Endothelial cell of umbilical vein (primary cell): ENCODE measurements at regions of chr6 and their contacts with region 1.

Region 1: GRCh38 chr6:170516783-170517616 is 36.1 kb downstream of the PSMB1 start:
- DNase-seq: peak; percentile 59
- H3K4me3 ChIP-seq: no peak overlapping the region
- H3K27ac ChIP-seq: no peak overlapping the region
- H3K4me1 ChIP-seq: no peaks in the 10 kb centered on the region
- H3K27me3 ChIP-seq: peaks cover 2 to 7% of the 10 kb centered on the region in 2 experiments
- CTCF ChIP-seq: peak; percentile 60 to 76
- POLR2A ChIP-seq: no peak

Region 2: GRCh38 chr6:168956884-168957730 is 1559.9 kb before region 1 on chr6:
- CTCF ChIA-PET with region 1: interaction called, 5 read pairs
- POLR2A ChIA-PET with region 1: no interaction called
- dilution Hi-C with region 1: no loop called
- intact Hi-C with region 1: loop called (anchors 1 kb)
- DNase-seq: peak; percentile 17
- H3K4me3 ChIP-seq: no peak overlapping the region
- H3K27ac ChIP-seq: no peak overlapping the region
- H3K4me1 ChIP-seq: no peaks in the 10 kb centered on the region
- H3K27me3 ChIP-seq: no peaks in the 10 kb centered on the region
- CTCF ChIP-seq: peak; percentile 60 to 65
- POLR2A ChIP-seq: no peak

Region 3: GRCh38 chr6:169800668-169801395 is 716.2 kb before region 1 on chr6:
- CTCF ChIA-PET with region 1: interaction called, 11 read pairs
- POLR2A ChIA-PET with region 1: no interaction called
- dilution Hi-C with region 1: no loop called
- intact Hi-C with region 1: no loop called
- DNase-seq: no peak
- H3K4me3 ChIP-seq: no peak overlapping the region
- H3K27ac ChIP-seq: no peak overlapping the region
- H3K4me1 ChIP-seq: no peaks in the 10 kb centered on the region
- H3K27me3 ChIP-seq: peaks cover 0 to 16% of the 10 kb centered on the region in 2 experiments
- CTCF ChIP-seq: no peak
- POLR2A ChIP-seq: no peak

Region 4: GRCh38 chr6:169968541-169969270 is 548.3 kb before region 1 on chr6:
- CTCF ChIA-PET with region 1: no interaction called
- POLR2A ChIA-PET with region 1: no interaction called
- dilution Hi-C with region 1: no loop called
- intact Hi-C with region 1: no loop called
- DNase-seq: no peak
- H3K4me3 ChIP-seq: no peak overlapping the region
- H3K27ac ChIP-seq: no peak overlapping the region
- H3K4me1 ChIP-seq: no peaks in the 10 kb centered on the region
- H3K27me3 ChIP-seq: no peaks in the 10 kb centered on the region
- CTCF ChIP-seq: no peak
- POLR2A ChIP-seq: no peak

Region 5: DNA sequence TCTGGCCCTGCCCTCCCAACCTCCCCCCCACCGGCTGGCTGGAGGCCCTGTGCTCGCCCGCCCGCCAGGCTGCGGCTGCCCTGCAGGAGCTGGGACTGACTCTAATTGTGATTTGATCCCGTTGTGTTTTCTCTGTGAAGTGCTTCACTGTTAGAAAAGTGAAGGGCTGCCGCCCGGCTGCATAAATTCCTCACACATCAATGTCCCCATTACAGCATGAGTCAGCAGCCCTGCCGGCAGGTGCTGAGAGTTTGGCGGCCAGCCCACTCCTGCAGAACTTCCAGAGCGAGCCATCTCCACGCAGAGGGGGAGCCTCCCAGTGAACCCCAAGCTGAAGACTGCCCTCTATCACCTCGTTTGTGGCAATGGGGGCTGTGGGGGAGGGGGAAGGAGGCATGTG is 364.0 kb before region 1 on chr6:
- CTCF ChIA-PET with region 1: interaction called, 4 read pairs
- POLR2A ChIA-PET with region 1: no interaction called
- dilution Hi-C with region 1: no loop called
- intact Hi-C with region 1: loop called (anchors 10 kb)
- DNase-seq: no peak
- H3K4me3 ChIP-seq: no peak overlapping the region
- H3K27ac ChIP-seq: no peak overlapping the region
- H3K4me1 ChIP-seq: peaks cover 7% of the 10 kb centered on the region
- H3K27me3 ChIP-seq: no peaks in the 10 kb centered on the region
- CTCF ChIP-seq: no peak
- POLR2A ChIP-seq: no peak

Region 6: DNA sequence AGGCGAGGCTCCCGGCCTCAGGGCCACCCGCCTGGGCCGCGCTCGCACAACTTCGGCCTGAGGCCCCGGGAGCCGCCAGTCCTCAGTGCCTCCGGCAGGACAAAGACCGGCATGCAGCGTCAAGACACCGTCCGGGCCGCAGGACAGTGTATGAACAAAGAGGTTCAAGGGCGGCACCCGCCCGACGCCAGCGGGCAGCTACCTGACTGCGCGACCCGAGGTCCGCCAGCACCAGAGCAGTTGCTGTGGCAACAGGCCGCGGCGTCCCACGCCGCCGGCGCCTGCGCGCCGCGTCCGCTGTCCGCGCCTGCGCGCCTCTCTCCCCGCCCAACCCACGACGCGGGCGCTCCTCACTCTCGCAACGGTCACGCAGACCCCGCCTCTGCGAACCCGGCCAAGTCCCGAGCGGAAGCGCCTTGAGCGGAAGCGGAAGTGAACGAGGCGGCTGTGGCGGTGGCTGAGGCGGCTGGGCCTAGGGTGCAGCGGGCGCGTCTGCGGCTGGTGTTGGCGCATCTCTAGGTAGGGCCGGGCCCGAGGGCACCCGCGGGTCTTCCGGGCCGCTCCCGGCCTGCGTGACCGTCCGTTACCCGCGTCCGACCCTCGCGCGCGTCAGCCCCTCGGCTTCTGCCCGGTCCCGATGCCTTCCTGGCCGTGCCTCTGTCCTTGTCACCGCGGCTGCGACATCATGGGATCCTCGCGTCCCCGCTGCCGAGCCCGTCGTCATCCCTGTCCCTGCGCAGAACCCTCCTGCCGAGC is 210.5 kb before region 1 on chr6 and contains the start of gene FAM120B:
- CTCF ChIA-PET with region 1: interaction called, 5 read pairs
- POLR2A ChIA-PET with region 1: no interaction called
- dilution Hi-C with region 1: no loop called
- intact Hi-C with region 1: loop called (anchors 5 kb)
- DNase-seq: peak; percentile 96
- H3K4me3 ChIP-seq: peak within 1 kb of the TSS; percentile 48 to 86 (median 78)
- H3K27ac ChIP-seq: peak within 1 kb of the TSS; percentile 73
- H3K4me1 ChIP-seq: peaks cover 11% of the 10 kb centered on the region
- H3K27me3 ChIP-seq: no peaks in the 10 kb centered on the region
- CTCF ChIP-seq: no peak
- POLR2A ChIP-seq: peak; percentile 97
- total RNA-seq, gene FAM120B: 28.1 and 28.2 TPM in 2 replicates

Region 7: DNA sequence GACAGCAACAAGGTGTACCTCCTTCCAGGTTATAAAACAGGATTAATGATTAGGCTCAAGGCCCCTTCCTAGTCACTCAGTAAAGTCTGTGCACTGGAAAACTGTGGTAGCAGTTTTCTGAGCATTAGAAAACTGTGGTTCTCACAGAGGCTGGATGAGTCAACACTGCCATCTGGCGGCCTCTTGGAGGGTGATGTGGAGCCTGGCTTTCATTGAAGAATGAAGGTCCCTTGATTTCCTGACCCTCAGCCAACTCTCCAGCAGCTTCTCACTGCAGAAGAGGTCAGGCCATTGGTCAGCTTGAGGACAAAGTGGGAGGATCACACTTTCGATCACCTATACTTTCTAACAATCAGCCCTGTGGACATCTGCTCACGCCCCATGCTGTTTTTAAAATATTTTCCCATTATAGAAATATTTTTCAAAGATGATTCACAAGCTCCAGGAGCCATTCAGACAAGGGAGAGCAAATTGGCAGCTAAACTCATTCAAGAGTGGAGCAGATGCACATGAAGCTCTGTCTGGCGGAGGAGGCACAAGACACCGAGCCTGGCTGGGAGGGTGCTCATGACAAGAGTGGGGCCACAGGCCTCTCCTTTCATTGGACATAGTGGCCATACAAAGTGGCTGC is 13.0 kb after region 1 on chr6:
- CTCF ChIA-PET with region 1: interaction called, 17 read pairs
- POLR2A ChIA-PET with region 1: interaction called, 4 read pairs
- dilution Hi-C with region 1: no loop called
- intact Hi-C with region 1: no loop called
- DNase-seq: peak; percentile 67
- H3K4me3 ChIP-seq: no peak overlapping the region
- H3K27ac ChIP-seq: no peak overlapping the region
- H3K4me1 ChIP-seq: no peaks in the 10 kb centered on the region
- H3K27me3 ChIP-seq: no peaks in the 10 kb centered on the region
- CTCF ChIP-seq: peak; percentile 87 to 90
- POLR2A ChIP-seq: no peak